Stomach (tissue), 19 donors: ENCODE measurements at regions of chr7 and their contacts with region 1.

Region 1: DNA sequence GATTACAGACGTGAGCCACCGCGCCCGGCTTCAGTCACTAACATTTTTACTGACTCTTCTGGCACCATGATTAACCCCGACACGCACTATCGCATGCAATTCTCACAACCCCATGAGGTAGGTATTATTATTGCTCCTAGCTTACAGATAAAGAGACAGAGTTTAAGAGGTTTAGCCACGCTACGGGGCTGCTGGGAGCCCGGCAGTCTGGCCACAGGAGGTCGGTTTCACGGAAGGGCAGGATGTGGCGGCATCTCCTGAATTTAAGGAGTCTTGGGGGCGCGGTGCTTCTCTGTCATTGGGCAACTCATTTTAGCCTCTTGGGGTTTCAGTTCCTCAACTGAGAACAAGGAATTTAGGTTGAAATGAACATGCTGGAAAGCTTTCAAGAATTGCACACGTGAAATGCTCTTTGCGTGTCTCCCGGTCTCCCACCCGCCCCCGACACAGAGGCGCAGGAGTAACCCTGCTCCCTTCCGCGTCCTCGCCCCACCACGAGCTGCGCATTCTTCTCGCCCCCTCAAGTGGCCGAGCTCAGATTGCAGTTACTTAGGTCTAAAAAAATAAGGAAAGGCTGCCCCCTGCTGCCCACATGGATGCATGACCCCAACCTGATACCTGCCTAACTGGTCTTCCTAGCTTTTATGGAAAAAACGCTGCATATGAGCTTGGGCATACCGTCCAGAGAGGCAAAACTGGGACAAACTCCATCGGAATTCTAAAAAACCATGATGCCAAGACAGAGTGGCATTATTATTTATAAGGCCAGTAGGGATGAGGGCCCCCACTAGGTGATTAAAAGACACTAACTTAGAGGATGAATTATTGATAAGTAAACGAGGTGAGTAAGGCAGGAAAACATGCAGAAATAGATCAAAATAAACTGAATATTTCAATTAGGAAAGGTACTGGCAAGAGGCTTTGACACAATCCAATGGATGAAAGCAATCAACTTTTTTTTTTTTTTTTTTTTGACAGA is 12.4 kb downstream of the PRSS2 start:
- DNase-seq: peak; percentile 88 to 95
- H3K4me3 ChIP-seq: peak overlapping the region; percentile 29 to 38 (median 32)
- H3K27ac ChIP-seq: no peak overlapping the region
- H3K4me1 ChIP-seq: peaks cover 0 to 9% (median 5%) of the 10 kb centered on the region in 4 donors
- H3K27me3 ChIP-seq: peaks cover 0 to 48% (median 6%) of the 10 kb centered on the region in 3 donors
- CTCF ChIP-seq: peak in 5 of 7 experiments; percentile 77 to 92 (median 85)
- EP300 ChIP-seq: no peak
- POLR2A ChIP-seq: no peak

Region 2: GRCh38 chr7:142632291-142633134 is 150.7 kb before region 1 on chr7:
- intact Hi-C with region 1: loop called (anchors 10 kb)
- DNase-seq: peak; percentile 60 to 80
- H3K4me3 ChIP-seq: no peak overlapping the region
- H3K27ac ChIP-seq: no peak overlapping the region
- H3K4me1 ChIP-seq: peaks cover 0 to 5% (median 0%) of the 10 kb centered on the region in 4 donors
- H3K27me3 ChIP-seq: peaks cover 0 to 26% (median 0%) of the 10 kb centered on the region in 3 donors
- CTCF ChIP-seq: peak in 5 of 7 experiments; percentile 33 to 70 (median 60)
- EP300 ChIP-seq: no peak
- POLR2A ChIP-seq: no peak

Region 3: GRCh38 chr7:142745091-142745635 is 38.0 kb before region 1 on chr7:
- intact Hi-C with region 1: no loop called
- DNase-seq: no peak
- H3K4me3 ChIP-seq: no peak overlapping the region
- H3K27ac ChIP-seq: no peak overlapping the region
- H3K4me1 ChIP-seq: no peaks in the 10 kb centered on the region
- H3K27me3 ChIP-seq: no peaks in the 10 kb centered on the region
- CTCF ChIP-seq: no peak
- EP300 ChIP-seq: no peak
- POLR2A ChIP-seq: no peak